WTC11 (cell line): ENCODE measurements at regions of chr20 and their contacts with region 1.

Region 1: DNA sequence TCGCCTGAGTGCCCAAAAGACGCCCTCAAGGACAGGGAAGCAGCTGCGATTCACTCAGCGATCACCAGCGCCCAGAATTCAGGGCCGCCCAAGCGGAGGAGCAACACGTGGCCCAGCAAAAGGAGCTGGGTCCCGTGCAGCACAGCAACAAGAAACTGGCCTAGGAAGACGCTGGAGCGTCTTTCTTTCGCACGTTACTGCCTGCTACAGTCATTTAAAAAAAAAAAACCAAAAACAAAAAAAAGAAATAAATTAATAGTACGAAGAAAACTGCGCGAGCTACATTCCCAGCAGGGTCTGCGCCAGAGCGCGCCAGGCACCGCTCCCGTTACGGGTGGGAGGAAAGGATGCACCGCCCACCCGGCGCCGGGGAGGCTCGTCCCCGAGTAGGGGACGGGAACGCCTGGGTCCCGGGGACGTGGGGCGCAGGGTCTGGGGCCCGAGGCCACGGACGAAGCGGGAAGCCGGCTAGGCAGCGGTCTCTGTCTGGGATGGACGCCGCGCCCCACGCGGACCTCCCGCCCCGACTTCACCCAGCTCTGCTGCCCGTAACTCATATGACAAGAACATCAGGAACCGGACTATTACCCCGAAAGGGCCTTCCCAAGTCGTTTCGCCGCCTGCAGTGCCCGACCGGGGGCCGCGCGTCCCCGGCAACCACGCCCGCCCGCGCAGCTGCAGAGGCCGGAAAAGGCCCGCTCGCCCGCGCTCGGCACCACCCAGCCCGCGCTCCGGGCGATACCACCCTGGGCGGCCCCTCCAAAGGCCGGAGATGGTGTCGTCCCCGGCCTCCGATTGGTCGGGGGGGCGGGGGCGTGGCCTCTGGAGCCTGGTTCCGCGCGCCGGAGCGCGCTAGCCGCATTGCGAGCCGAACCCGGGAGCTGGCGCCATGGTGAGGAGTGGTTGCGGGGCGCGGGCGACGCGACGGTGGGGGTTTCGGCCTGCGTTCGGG is at the start of gene NOP56:
- DNase-seq: peak; percentile 91
- ATAC-seq: peak; percentile 80
- H3K4me3 Mint-ChIP-seq: peak within 1 kb of the TSS; percentile 91
- H3K27ac Mint-ChIP-seq: peak within 1 kb of the TSS; percentile 88
- H3K4me1 Mint-ChIP-seq: peaks cover 24% of the 10 kb centered on the region
- H3K27me3 Mint-ChIP-seq: no peaks in the 10 kb centered on the region
- CTCF ChIP-seq: no peak
- total RNA-seq, gene NOP56: 484 to 634 TPM (median 500 TPM) in 3 replicates

Region 2: GRCh38 chr20:2663887-2664719 is 12.1 kb after region 1 on chr20 and contains the start of gene IDH3B:
- CTCF ChIA-PET with region 1: interaction called, 4 read pairs
- POLR2A ChIA-PET with region 1: interaction called, 22 read pairs
- DNase-seq: peak; percentile 88
- ATAC-seq: peak; percentile 90
- H3K4me3 Mint-ChIP-seq: peak within 1 kb of the TSS; percentile 98
- H3K27ac Mint-ChIP-seq: peak within 1 kb of the TSS; percentile 100
- H3K4me1 Mint-ChIP-seq: peaks cover 6% of the 10 kb centered on the region
- H3K27me3 Mint-ChIP-seq: peaks cover 24% of the 10 kb centered on the region
- CTCF ChIP-seq: no peak
- total RNA-seq, gene IDH3B: 101 to 136 TPM (median 107 TPM) in 3 replicates